ENCODE measurements at regions of chr2 and their contacts with region 1.

Region 1: GRCh38 chr2:104872866-104873688 is 19.2 kb downstream of the POU3F3 start:
- DNase-seq: peak; percentile 49
- H3K4me3 ChIP-seq: peak overlapping the region in 1 of 3 experiments; percentile 32
- H3K27ac ChIP-seq: no peak overlapping the region
- H3K4me1 ChIP-seq: no peaks in the 10 kb centered on the region
- H3K27me3 ChIP-seq: peaks cover 42 to 53% of the 10 kb centered on the region in 2 experiments
- CTCF ChIP-seq: peak; percentile 40 to 59
- POLR2A ChIP-seq: no peak

Region 2: DNA sequence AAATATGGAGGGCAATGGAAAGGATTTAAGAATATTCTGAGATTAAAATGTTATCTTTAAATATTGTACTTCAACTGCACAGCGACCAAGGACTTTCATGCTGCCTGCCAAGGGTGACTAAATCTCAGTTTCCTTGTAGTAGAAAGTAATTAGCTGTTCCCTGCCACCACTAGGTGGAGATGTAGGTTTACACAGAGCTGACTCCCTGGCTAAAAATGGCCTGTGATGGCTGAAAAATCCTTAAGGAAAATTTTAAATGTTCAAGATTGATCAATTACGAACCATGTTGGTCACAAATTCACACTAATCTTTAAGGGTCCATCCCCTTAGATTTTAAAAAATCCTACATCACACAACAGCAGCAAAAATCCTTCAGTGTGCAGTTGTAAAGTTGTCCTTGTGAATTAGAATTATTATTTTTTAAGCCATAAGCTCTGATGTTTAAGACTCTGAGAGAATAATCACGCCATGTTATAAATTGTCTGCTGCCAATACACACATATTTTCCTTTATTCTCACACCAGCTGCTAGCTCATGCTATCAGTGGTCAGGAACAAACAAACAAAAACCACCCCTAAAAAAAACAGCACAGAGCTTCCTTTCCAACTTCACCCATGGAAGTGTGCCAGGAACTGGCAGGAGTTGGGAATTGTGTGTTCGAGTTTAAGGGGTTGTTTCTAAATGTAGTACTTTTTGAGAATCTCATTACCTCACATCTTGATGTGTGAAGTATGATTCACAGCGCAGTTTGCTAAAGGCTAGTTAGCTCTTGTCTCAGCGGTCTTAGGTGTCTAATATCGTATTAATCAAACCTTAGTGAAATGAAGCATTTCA is 1711.4 kb before region 1 on chr2:
- CTCF ChIA-PET with region 1: interaction called, 7 read pairs
- POLR2A ChIA-PET with region 1: no interaction called
- dilution Hi-C with region 1: no loop called
- intact Hi-C with region 1: loop called (anchors 10 kb)
- DNase-seq: peak; percentile 28
- H3K4me3 ChIP-seq: no peak overlapping the region
- H3K27ac ChIP-seq: no peak overlapping the region
- H3K4me1 ChIP-seq: no peaks in the 10 kb centered on the region
- H3K27me3 ChIP-seq: no peaks in the 10 kb centered on the region
- CTCF ChIP-seq: peak; percentile 47 to 50
- POLR2A ChIP-seq: no peak

Measured in endothelial cell of umbilical vein (primary cell).